ENCODE measurements at regions of chr6 and their contacts with region 1.

Region 1: GRCh38 chr6:100001915-100002388 is 7.9 kb upstream of the MCHR2 start:
- DNase-seq: peak; percentile 71
- H3K4me3 ChIP-seq: no peak overlapping the region
- H3K27ac ChIP-seq: no peak overlapping the region
- H3K4me1 ChIP-seq: no peaks in the 10 kb centered on the region
- H3K27me3 ChIP-seq: peaks cover 12% of the 10 kb centered on the region
- CTCF ChIP-seq: peak; percentile 90

Region 2: DNA sequence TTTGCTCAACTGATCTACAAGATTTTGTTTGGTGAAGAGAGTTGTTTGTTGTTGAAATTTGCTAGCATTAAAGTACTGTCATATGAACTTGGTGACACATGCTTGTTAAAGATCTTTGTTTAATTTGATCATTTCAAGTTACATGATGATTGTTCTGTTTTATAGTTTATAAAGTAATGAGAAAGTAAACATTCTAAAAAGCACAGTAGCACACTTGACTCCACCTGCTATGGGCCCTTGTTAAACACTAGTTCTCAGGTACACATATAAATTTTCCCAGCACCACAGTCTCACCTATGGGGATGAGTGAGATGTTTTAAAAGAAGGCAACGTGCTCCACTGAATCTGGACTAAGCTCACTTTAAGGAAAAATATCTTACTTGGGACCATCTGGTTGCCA is 22.0 kb before region 1 on chr6:
- CTCF ChIA-PET with region 1: interaction called, 11 read pairs
- POLR2A ChIA-PET with region 1: no interaction called
- intact Hi-C with region 1: no loop called
- DNase-seq: no peak
- H3K4me3 ChIP-seq: no peak overlapping the region
- H3K27ac ChIP-seq: no peak overlapping the region
- H3K4me1 ChIP-seq: no peaks in the 10 kb centered on the region
- H3K27me3 ChIP-seq: no peaks in the 10 kb centered on the region
- CTCF ChIP-seq: no peak

Region 3: GRCh38 chr6:100099189-100100074 is 97.5 kb after region 1 on chr6:
- CTCF ChIA-PET with region 1: interaction called, 24 read pairs
- POLR2A ChIA-PET with region 1: no interaction called
- intact Hi-C with region 1: loop called (anchors 1 kb)
- DNase-seq: peak; percentile 60
- H3K4me3 ChIP-seq: no peak overlapping the region
- H3K27ac ChIP-seq: no peak overlapping the region
- H3K4me1 ChIP-seq: peaks cover 22% of the 10 kb centered on the region
- H3K27me3 ChIP-seq: no peaks in the 10 kb centered on the region
- CTCF ChIP-seq: peak; percentile 77

Region 4: GRCh38 chr6:100479179-100480035 is 477.5 kb after region 1 on chr6:
- CTCF ChIA-PET with region 1: interaction called, 3 read pairs
- POLR2A ChIA-PET with region 1: no interaction called
- intact Hi-C with region 1: loop called (anchors 5 kb)
- DNase-seq: peak; percentile 49
- H3K4me3 ChIP-seq: no peak overlapping the region
- H3K27ac ChIP-seq: no peak overlapping the region
- H3K4me1 ChIP-seq: no peaks in the 10 kb centered on the region
- H3K27me3 ChIP-seq: no peaks in the 10 kb centered on the region
- CTCF ChIP-seq: peak; percentile 79